ENCODE measurements at regions of chr2 and their contacts with region 1.

Region 1: DNA sequence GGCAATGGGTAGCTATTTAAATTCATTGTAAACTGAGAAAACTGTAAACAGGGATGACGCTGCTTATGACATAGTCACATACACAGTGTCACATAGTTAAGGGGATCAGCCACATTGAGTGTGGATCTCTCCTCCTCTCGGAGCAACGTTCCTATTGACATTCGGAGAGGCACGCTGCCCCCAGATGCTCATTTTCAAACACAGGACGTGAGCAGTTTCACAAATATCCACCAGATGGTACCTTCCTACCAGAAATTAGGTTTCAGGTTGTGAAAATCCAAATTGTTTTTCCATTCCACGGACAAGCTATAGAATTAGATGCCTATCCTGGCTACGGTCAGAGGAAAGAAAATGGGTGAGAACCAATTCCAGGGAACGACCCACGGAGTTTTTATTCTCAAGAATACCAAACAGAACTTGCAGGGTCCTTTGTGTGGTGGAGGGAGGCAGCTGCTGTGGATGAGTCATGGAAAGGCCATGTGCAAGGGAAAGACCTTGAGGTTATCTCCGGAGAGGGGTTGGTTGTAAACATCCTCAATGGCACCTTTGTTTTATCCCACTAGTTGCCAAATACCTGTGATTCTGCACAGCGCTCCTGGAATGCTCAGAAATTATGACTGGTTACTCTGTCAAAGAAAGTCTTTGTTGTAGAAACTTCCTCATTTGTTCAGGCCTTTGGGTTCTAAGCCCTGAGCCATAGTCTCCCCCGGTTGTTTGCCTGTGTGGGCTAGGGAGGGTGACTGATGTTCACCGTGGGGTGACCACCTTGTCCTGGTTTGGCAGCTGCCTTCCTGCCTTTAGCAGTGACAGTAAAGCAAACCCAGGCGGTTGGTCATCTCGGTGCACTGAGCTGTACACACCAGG is 88.0 kb downstream of the ACTR3 start:
- DNase-seq: peak in 5 of 6 donors; percentile 34 to 62 (median 59)
- ATAC-seq: peak; percentile 79 to 89 (median 86)
- H3K4me3 ChIP-seq: no peak overlapping the region
- H3K27ac ChIP-seq: peak overlapping the region; percentile 78 to 82 (median 79)
- H3K4me1 ChIP-seq: peaks cover 0 to 3% (median 0%) of the 10 kb centered on the region in 3 donors
- H3K27me3 ChIP-seq: no peaks in the 10 kb centered on the region
- CTCF ChIP-seq: peak in 3 of 4 donors; percentile 9 to 41 (median 29)

Region 2: GRCh38 chr2:114543236-114543766 is 565.4 kb after region 1 on chr2:
- intact Hi-C with region 1: loop called in 1 of 3 experiments (anchors 10 kb)
- DNase-seq: peak in 3 of 6 donors; percentile 18 to 39 (median 32)
- ATAC-seq: peak; percentile 76 to 84 (median 80)
- H3K4me3 ChIP-seq: no peak overlapping the region
- H3K27ac ChIP-seq: peak overlapping the region in 2 of 4 donors; percentile 13 to 72
- H3K4me1 ChIP-seq: peaks cover 0 to 12% (median 9%) of the 10 kb centered on the region in 3 donors
- H3K27me3 ChIP-seq: no peaks in the 10 kb centered on the region
- CTCF ChIP-seq: peak in 3 of 4 donors; percentile 4 to 24 (median 10)

Region 3: GRCh38 chr2:114550895-114551793 is 573.3 kb after region 1 on chr2:
- intact Hi-C with region 1: loop called in 2 of 3 experiments (anchors 10 kb)
- DNase-seq: peak in 4 of 6 donors; percentile 31 to 61 (median 54)
- ATAC-seq: peak; percentile 82 to 95 (median 91)
- H3K4me3 ChIP-seq: no peak overlapping the region
- H3K27ac ChIP-seq: no peak overlapping the region
- H3K4me1 ChIP-seq: no peaks in the 10 kb centered on the region
- H3K27me3 ChIP-seq: no peaks in the 10 kb centered on the region
- CTCF ChIP-seq: peak; percentile 42 to 62 (median 59)

Measured in pancreas (tissue), 10 donors.